Caco-2 (cell line): ENCODE measurements at regions of chr14 and their contacts with region 1.

Region 1: DNA sequence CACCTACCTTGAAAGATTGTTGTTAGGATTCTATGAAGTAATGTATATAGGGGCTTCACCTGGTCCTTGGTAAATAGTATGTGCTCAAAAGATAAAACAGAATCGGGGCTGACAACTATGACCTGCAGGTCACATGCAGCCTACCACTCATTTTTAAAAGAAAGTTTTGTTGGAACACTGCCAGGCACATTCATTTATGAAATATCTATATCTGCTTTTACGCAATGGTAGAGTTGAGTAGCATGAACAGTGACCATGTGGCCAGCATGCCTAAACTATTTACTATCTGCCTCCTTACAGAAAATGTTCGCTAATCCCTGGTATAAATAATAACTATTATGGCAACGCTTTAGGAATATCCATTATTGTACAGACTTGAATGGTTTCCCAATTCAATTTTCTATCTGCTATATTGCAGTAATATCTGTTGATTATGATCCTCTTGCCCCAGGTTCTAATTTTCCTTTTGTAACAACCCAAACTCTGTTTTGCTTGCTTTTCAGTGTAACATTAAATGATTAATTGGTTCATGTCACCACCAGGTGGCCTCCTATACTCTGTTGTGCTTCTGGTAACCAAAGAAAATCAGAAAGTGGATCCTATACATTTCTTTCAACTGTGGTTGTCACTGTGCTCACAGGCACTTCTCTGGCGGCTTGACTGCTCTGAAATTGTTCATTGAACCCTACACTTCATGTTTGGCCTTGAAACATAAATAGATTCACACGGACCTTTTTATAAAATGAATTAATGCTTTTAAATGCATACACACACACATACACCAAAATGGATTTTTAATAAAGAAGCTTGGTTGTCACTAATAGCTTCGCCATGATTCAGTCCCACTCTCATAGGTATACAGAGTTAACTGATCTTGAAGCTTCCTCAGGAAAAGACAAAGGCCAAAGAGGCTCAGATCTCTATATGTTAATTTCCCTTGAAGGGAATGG is 227.7 kb upstream of the NPAS3 start:
- DNase-seq: peak in 1 of 2 experiments; percentile 41
- H3K4me3 ChIP-seq: no peak overlapping the region
- H3K4me3 Mint-ChIP-seq: no peak overlapping the region
- H3K27ac Mint-ChIP-seq: no peak overlapping the region
- H3K4me1 ChIP-seq: no peaks in the 10 kb centered on the region
- H3K4me1 Mint-ChIP-seq: no peaks in the 10 kb centered on the region
- H3K27me3 ChIP-seq: no peaks in the 10 kb centered on the region
- H3K27me3 Mint-ChIP-seq: peaks cover 16% of the 10 kb centered on the region
- CTCF ChIP-seq: peak; percentile 52 to 62

Region 2: GRCh38 chr14:32826404-32827082 is 115.5 kb after region 1 on chr14:
- CTCF ChIA-PET with region 1: no interaction called
- POLR2A ChIA-PET with region 1: no interaction called
- intact Hi-C with region 1: loop called (anchors 1 kb)
- DNase-seq: no peak
- H3K4me3 ChIP-seq: no peak overlapping the region
- H3K4me3 Mint-ChIP-seq: no peak overlapping the region
- H3K27ac Mint-ChIP-seq: no peak overlapping the region
- H3K4me1 ChIP-seq: no peaks in the 10 kb centered on the region
- H3K4me1 Mint-ChIP-seq: no peaks in the 10 kb centered on the region
- H3K27me3 ChIP-seq: no peaks in the 10 kb centered on the region
- H3K27me3 Mint-ChIP-seq: peaks cover 3% of the 10 kb centered on the region
- CTCF ChIP-seq: no peak

Region 3: GRCh38 chr14:32939254-32940065 is 228.5 kb after region 1 on chr14:
- CTCF ChIA-PET with region 1: interaction called, 3 read pairs
- POLR2A ChIA-PET with region 1: no interaction called
- intact Hi-C with region 1: loop called (anchors 10 kb)
- DNase-seq: peak in 1 of 2 experiments; percentile 41
- H3K4me3 ChIP-seq: peak overlapping the region; percentile 40
- H3K4me3 Mint-ChIP-seq: peak overlapping the region; percentile 86
- H3K27ac Mint-ChIP-seq: no peak overlapping the region
- H3K4me1 ChIP-seq: no peaks in the 10 kb centered on the region
- H3K4me1 Mint-ChIP-seq: peaks cover 18% of the 10 kb centered on the region
- H3K27me3 ChIP-seq: peaks cover 6% of the 10 kb centered on the region
- H3K27me3 Mint-ChIP-seq: peaks cover 39% of the 10 kb centered on the region
- CTCF ChIP-seq: no peak

Region 4: DNA sequence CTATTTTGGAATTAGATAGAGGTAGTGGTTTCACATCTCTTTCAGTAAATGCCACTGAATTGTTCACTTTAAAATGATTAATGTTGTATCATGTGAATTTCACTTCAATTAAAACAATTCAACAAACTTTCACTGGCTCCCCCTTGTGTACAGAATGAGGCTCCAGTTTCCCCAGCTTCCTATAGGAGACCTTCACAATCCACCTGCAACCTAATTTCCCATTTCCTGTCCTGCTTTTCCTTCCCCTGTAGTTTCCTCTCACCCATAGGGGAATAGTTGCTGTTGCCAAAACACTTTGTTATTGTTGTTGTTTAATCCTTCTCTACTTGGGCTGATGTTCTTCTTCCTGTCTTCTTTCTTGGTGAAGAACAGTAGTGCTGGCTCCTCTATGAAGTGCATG is 287.4 kb after region 1 on chr14:
- CTCF ChIA-PET with region 1: no interaction called
- POLR2A ChIA-PET with region 1: no interaction called
- intact Hi-C with region 1: loop called (anchors 5 kb)
- DNase-seq: no peak
- H3K4me3 ChIP-seq: no peak overlapping the region
- H3K4me3 Mint-ChIP-seq: no peak overlapping the region
- H3K27ac Mint-ChIP-seq: no peak overlapping the region
- H3K4me1 ChIP-seq: no peaks in the 10 kb centered on the region
- H3K4me1 Mint-ChIP-seq: no peaks in the 10 kb centered on the region
- H3K27me3 ChIP-seq: no peaks in the 10 kb centered on the region
- H3K27me3 Mint-ChIP-seq: no peaks in the 10 kb centered on the region
- CTCF ChIP-seq: peak; percentile 6 to 8

Region 5: GRCh38 chr14:33432407-33433023 is 721.5 kb after region 1 on chr14:
- CTCF ChIA-PET with region 1: no interaction called
- POLR2A ChIA-PET with region 1: no interaction called
- intact Hi-C with region 1: loop called (anchors 5 kb)
- DNase-seq: peak in 1 of 2 experiments; percentile 10
- H3K4me3 ChIP-seq: no peak overlapping the region
- H3K4me3 Mint-ChIP-seq: no peak overlapping the region
- H3K27ac Mint-ChIP-seq: no peak overlapping the region
- H3K4me1 ChIP-seq: no peaks in the 10 kb centered on the region
- H3K4me1 Mint-ChIP-seq: no peaks in the 10 kb centered on the region
- H3K27me3 ChIP-seq: no peaks in the 10 kb centered on the region
- H3K27me3 Mint-ChIP-seq: peaks cover 5% of the 10 kb centered on the region
- CTCF ChIP-seq: peak; percentile 28 to 39